Activated T-helper 1 cell treated with anti-CD3 and anti-CD28 coated beads, Interleukin-12 subunit alpha, Interleukin-12 subunit beta, Interleukin-2, Interleukin-4 antibody, amounts not matched to agents 30 ng/mL and 10 ng/mL and 1 ng/mL, durations not matched to agents 14 hours and 24 hours and 36 hours (primary cell): ENCODE measurements at regions of chr5 and their contacts with region 1.

Region 1: DNA sequence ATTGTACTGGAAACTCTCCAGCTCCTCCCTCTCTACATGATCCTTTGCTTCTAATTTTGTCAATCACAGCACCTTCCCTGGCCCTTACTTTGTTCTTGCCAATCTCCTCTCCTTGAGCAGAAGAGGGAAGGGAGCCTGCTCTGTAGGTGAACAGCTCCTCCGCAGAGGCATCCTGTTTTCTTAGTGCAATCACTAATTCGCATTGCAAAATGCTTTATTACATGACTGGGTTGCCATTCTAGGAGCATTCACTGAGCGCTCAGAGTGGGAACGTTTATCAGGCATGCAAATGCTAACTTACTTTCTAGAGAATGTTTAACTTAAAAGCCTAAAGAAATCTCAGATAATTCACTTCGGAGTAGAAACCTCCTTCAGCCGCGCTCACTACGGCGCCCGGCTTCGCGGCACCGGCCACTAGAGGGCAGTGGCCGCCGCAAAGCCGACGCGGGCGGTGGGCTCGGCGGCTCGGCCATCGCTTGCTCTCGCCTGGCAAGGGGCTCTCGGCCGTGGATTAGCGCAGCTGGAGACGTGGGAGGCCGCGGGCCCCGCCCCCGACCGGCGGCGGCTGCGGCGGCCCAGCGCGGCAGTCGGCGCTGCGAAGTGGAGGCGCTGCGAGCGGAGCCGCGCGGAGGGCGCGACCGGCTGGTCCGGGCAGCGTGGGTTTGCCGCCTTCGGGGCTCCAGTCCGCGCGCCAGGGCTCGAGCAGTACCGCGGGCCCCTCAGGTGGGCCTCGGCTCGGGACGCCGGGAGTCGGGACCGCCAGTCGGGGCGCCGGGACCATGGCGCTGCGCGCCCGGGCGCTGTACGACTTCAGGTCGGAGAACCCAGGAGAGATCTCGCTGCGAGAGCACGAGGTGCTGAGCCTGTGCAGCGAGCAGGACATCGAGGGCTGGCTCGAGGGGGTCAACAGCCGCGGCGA is at the start of gene SNX18:
- DNase-seq: peak; percentile 90
- H3K4me3 Mint-ChIP-seq: peak within 1 kb of the TSS; percentile 86
- H3K27ac Mint-ChIP-seq: peak within 1 kb of the TSS; percentile 76
- H3K4me1 Mint-ChIP-seq: peaks cover 42% of the 10 kb centered on the region
- H3K27me3 Mint-ChIP-seq: peaks cover 20% of the 10 kb centered on the region
- total RNA-seq, gene SNX18: 25.4 and 27.9 TPM in 2 replicates

Region 2: DNA sequence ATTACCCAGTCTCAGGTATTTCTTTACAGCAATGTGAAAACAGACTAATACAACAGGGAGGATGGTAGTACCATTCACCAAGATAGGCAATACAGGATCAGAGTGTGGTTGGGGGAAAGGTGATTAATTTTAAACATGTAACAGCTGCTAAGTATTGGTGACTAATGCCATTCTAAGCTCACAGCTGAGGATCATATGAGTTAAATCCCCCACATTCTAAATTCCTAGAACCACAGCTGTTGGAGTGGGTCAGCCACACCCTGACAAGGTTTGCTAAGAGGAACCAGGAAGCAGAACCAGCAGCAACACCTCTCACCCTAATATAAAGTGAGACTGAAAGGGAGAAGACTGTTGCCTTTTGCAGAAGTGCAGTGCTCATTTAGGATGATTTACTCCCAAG is 37.1 kb before region 1 on chr5:
- intact Hi-C with region 1: no loop called
- DNase-seq: no peak
- H3K4me3 Mint-ChIP-seq: no peak overlapping the region
- H3K27ac Mint-ChIP-seq: no peak overlapping the region
- H3K4me1 Mint-ChIP-seq: no peaks in the 10 kb centered on the region
- H3K27me3 Mint-ChIP-seq: peaks cover 3% of the 10 kb centered on the region

Region 3: DNA sequence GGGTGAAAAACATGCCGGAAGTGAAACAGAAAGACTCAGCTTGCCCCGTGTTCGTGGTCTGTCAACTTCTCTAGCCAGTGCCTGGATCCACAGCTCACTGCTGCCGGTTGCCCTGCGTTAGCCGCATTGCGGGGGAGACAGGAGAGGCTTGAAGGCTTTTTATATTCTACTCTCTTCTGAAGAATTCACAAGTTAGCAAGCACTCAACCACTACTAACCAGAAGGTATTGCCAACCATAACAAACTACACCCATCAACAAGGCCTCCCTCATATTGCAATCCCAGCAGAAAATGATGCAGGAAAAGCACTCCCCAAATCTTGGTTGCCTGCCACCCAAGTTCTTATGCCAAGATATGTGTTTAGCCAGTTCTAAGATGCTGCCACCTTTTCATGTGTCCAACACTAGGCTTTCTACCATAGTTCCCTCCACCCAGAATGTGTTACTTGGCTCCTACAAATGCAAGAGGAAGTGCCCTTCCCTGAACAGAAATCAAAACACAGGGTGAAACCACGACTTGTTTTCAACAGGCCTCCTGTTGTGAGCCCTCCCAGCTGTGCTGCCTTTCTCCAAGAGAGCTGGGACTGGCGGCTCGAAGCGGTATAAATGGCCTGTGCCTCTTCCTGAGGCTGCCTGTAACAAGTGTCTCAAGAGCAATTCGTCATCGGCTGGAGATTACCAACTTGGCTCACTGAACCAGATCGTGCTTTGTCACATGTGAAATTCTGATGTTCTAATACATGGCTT is 129.1 kb after region 1 on chr5:
- intact Hi-C with region 1: loop called (anchors 1 kb)
- DNase-seq: peak; percentile 80
- H3K4me3 Mint-ChIP-seq: peak overlapping the region; percentile 68
- H3K27ac Mint-ChIP-seq: peak overlapping the region; percentile 88
- H3K4me1 Mint-ChIP-seq: peaks cover 46% of the 10 kb centered on the region
- H3K27me3 Mint-ChIP-seq: no peaks in the 10 kb centered on the region

Region 4: DNA sequence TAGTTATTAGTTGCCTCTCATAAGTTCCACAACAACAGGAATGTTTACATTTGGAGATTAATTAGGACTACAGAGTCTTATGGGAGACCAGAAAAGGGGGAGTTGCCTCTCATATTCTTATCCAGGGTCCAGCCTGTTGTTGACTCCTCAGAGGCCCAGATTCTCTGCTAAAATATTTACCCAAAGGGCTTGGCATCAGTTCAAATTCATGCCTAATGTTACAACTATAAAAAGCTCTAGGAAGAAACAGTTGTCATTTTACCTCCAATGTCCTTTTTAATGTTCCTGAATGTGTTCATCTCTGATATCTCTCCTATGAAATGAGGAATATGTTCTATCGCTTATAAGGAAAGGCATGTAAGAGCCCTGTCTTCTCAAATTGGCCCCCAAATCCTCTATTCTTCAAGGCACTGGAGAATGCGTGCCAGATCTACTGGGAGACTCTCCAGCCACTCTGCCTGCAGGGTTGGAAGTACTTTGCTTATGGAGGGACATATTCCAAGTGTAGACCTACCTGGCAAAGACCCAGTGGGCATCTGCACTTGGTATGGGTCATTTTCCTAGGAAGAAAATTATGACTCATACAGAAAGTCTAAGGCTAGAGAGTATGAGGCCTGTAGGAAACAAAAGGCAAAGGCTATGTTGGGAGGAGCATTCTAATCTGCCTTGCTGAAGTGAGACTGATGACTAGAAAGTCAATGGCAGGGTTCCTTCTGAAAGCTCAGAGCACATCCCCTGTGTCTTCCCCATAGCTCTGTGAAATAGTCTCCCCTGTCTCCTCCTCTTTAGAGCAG is 275.4 kb after region 1 on chr5:
- intact Hi-C with region 1: loop called (anchors 1 kb)
- DNase-seq: no peak
- H3K4me3 Mint-ChIP-seq: peak overlapping the region; percentile 32
- H3K27ac Mint-ChIP-seq: peak overlapping the region; percentile 91
- H3K4me1 Mint-ChIP-seq: peaks cover 47% of the 10 kb centered on the region
- H3K27me3 Mint-ChIP-seq: peaks cover 3% of the 10 kb centered on the region

Region 5: GRCh38 chr5:54895816-54896341 is 378.4 kb after region 1 on chr5:
- intact Hi-C with region 1: loop called (anchors 1 kb)
- DNase-seq: no peak
- H3K4me3 Mint-ChIP-seq: peak overlapping the region; percentile 28
- H3K27ac Mint-ChIP-seq: no peak overlapping the region
- H3K4me1 Mint-ChIP-seq: peaks cover 5% of the 10 kb centered on the region
- H3K27me3 Mint-ChIP-seq: peaks cover 77% of the 10 kb centered on the region

Region 6: GRCh38 chr5:55146543-55147151 is 629.2 kb after region 1 on chr5:
- intact Hi-C with region 1: loop called (anchors 1 kb)
- DNase-seq: peak; percentile 82
- H3K4me3 Mint-ChIP-seq: peak overlapping the region; percentile 20
- H3K27ac Mint-ChIP-seq: no peak overlapping the region
- H3K4me1 Mint-ChIP-seq: peaks cover 31% of the 10 kb centered on the region
- H3K27me3 Mint-ChIP-seq: peaks cover 17% of the 10 kb centered on the region